HepG2 (cell line): ENCODE measurements at regions of chr2 and their contacts with region 1.

Region 1: DNA sequence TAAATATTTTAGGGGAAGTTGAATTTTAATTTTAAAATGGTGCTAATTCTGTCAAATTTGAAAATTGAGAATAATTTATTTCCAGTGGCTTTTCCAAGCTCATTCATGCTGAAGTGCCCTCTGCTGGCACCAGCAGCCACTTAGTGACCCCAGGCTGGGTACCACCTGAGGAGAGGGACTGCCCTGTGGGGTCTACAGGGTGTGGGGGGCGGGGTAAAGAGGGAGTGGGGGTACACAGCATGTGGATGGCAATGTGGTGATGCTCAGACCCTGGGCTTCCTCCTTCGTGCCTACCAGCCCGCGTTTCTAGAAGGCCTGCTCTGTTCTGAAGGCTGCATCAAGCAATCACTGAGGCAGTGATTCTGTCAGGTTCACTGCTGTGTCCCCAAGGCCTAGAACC is 45.1 kb upstream of the SCLY start:
- DNase-seq: no peak
- ATAC-seq: peak; percentile 35; the same call in 1 of the 3 replicates
- H3K4me3 ChIP-seq: no peak overlapping the region
- H3K27ac ChIP-seq: no peak overlapping the region
- H3K4me1 ChIP-seq: no peaks in the 10 kb centered on the region
- H3K27me3 ChIP-seq: no peaks in the 10 kb centered on the region
- CTCF ChIP-seq: peak; percentile 30; the same call in 1 of the 2 replicates
- EP300 ChIP-seq: no peak
- POLR2A ChIP-seq: no peak
- RAD21 ChIP-seq: no peak

Region 2: GRCh38 chr2:237858294-237859081 is 157.2 kb before region 1 on chr2:
- CTCF ChIA-PET with region 1: interaction called, 10 read pairs
- POLR2A ChIA-PET with region 1: no interaction called
- in situ Hi-C with region 1: no loop called
- intact Hi-C with region 1: no loop called
- DNase-seq: peak; percentile 78
- ATAC-seq: peak; percentile 92
- H3K4me3 ChIP-seq: peak overlapping the region in 1 of 3 experiments; percentile 61; a peak in 1 of 6 replicates
- H3K27ac ChIP-seq: no peak overlapping the region
- H3K4me1 ChIP-seq: peaks cover 29% of the 10 kb centered on the region
- H3K27me3 ChIP-seq: peaks cover 8 to 84% of the 10 kb centered on the region in 2 experiments; a peak in 4 of 5 replicates
- CTCF ChIP-seq: peak; percentile 97
- EP300 ChIP-seq: no peak
- POLR2A ChIP-seq: no peak
- RAD21 ChIP-seq: peak; percentile 96

Region 3: GRCh38 chr2:237996021-237996593 is 19.6 kb before region 1 on chr2:
- CTCF ChIA-PET with region 1: no interaction called
- POLR2A ChIA-PET with region 1: no interaction called
- in situ Hi-C with region 1: no loop called
- intact Hi-C with region 1: loop called (anchors 1 kb)
- DNase-seq: no peak
- ATAC-seq: no peak
- H3K4me3 ChIP-seq: no peak overlapping the region
- H3K27ac ChIP-seq: no peak overlapping the region
- H3K4me1 ChIP-seq: no peaks in the 10 kb centered on the region
- H3K27me3 ChIP-seq: no peaks in the 10 kb centered on the region
- CTCF ChIP-seq: no peak
- EP300 ChIP-seq: no peak
- POLR2A ChIP-seq: no peak
- RAD21 ChIP-seq: no peak